SK-N-SH (cell line): ENCODE measurements at regions of chr1 and their contacts with region 1.

Region 1: DNA sequence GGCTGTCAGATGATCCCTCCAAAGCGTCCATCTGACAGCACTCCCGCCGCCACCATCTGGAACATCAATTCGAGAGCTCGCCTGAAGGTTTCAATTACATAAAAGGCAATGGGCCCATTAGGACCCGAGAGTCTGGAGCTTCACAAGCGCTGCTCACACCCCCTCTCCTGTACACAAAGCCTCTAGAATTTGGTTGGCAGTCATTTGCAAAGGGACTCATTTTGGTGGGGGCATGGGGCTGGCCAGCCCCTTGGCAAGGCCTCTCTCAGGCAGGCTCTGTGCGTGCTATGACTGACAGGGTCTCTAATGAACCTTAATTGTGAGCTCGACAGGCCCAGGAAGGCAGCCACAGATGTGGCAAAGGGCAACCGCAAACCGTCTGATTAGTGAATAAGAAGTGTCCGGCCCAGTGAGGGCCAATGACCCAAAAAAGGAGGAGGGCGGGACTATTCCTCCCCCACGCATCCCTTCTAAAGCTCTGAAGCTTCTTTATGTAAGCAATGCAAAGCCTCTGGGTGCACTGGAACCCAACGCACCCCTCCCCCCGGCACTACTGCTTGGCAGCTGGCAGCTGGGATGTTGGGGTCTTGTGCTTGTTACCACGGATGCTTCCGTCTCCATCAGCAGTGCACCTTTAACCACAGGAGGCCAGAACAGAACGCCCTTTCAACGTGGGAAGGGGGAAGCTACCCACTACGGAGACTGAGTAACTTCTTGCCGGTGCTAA is 79.4 kb downstream of the CAPZB start:
- DNase-seq: peak; percentile 72
- H3K4me3 ChIP-seq: no peak overlapping the region
- H3K27ac ChIP-seq: peak overlapping the region in 1 of 2 experiments; percentile 95; a peak in 2 of 4 replicates
- H3K4me1 ChIP-seq: peaks cover 6 to 64% of the 10 kb centered on the region in 2 experiments; a peak in 3 of 4 replicates
- H3K27me3 ChIP-seq: no peaks in the 10 kb centered on the region
- CTCF ChIP-seq: no peak
- EP300 ChIP-seq: peak in 1 of 2 experiments; percentile 44; a peak in 1 of 4 replicates
- RAD21 ChIP-seq: no peak

Region 2: GRCh38 chr1:19390901-19391595 is 14.9 kb before region 1 on chr1:
- CTCF ChIA-PET with region 1: interaction called, 68 read pairs
- POLR2A ChIA-PET with region 1: no interaction called
- DNase-seq: peak; percentile 85
- H3K4me3 ChIP-seq: peak overlapping the region; percentile 33 to 56
- H3K27ac ChIP-seq: peak overlapping the region; percentile 80 to 97
- H3K4me1 ChIP-seq: peaks cover 37 to 70% of the 10 kb centered on the region in 2 experiments
- H3K27me3 ChIP-seq: no peaks in the 10 kb centered on the region
- CTCF ChIP-seq: peak; percentile 98
- EP300 ChIP-seq: peak; percentile 76 to 84
- RAD21 ChIP-seq: peak; percentile 77